OCI-LY7 (cell line): ENCODE measurements at regions of chr5 and their contacts with region 1.

Region 1: DNA sequence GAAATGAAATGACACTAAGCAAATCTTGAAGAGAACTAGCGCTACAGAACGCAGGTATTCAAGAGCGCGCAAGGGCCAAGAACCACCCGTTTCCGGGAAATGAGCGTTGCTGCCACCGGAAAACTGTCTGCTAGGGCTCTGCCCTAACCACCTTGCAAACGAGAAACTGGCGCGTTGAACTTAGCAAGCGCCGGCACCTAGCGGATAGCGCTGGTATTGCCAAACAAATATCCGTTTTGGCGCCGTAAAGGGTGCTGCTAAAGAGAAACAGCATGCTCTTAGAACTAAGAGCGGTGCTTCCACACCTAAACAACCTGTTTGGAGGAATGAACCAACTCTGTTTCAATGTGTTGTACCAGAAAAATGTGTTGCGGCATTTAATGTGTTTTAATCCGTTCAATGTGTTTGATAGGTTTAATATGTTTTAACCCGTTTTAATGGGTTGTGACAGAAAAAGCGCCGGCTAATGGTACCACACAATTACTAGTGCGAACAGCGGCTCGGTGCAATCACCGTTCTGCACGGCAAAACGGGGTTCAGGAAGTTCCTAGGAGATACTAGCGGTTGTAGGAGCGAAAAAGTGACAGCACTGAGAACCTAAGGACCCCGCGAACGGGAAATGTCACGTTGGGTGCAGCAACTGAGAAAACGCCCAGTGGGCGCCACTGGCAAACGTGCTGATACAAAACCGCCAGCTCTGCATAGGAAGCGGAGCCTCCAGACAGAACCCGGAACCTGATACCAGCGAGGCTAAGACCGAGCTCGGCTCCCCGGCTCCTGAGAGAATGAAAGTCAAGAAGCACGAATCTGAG is at the start of gene ANXA2R:
- DNase-seq: peak; percentile 98
- H3K4me3 ChIP-seq: peak within 1 kb of the TSS; percentile 70
- H3K27ac ChIP-seq: peak within 1 kb of the TSS; percentile 95
- H3K4me1 ChIP-seq: peaks cover 34% of the 10 kb centered on the region
- CTCF ChIP-seq: peak; percentile 77
- total RNA-seq, gene ANXA2R: 13.5 and 15.4 TPM in 2 replicates

Region 2: GRCh38 chr5:42950440-42951292 is 89.8 kb before region 1 on chr5:
- CTCF ChIA-PET with region 1: no interaction called
- POLR2A ChIA-PET with region 1: no interaction called
- intact Hi-C with region 1: loop called (anchors 5 kb)
- DNase-seq: peak; percentile 36
- H3K4me3 ChIP-seq: peak overlapping the region; percentile 68
- H3K27ac ChIP-seq: no peak overlapping the region
- H3K4me1 ChIP-seq: peaks cover 28% of the 10 kb centered on the region
- CTCF ChIP-seq: no peak

Region 3: DNA sequence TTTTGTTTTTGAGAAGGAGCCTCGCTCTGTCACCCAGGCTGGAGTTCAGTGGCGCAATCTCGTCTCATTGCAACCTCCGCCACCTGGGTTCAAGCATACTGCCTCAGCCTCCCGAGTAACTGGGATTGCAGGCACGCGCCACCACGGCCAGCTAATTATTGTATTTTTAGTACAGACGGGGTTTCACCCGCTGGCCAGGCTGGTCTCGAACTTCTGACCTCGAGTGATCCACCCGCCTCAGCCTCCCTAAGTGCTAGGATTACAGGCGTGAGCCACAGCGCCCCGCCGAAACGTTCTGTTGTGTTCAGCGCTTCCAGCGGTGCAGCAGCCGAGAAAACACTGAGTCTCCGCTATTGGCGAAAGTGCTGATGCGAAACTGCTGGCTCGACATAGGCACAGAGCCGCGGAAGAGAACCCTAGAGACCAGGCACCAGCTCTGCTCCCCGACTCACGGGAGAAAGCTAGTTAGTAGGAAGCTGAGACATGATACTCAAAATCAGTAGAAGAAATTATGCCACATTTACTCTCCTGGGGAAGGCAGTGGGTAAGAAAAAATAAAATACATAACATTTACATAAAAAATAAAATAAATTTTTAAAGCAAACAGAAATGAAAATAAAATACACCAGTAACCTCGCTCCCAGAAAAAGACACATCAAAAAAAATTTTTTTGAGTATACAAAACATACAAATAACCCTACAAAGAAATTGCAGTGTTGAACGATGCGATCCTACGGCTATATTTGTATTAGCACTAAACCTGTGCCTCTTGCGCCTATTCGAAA is 31.9 kb before region 1 on chr5:
- CTCF ChIA-PET with region 1: interaction called, 3 read pairs
- POLR2A ChIA-PET with region 1: interaction called, 55 read pairs
- intact Hi-C with region 1: loop called (anchors 1 kb)
- DNase-seq: peak; percentile 96
- H3K4me3 ChIP-seq: peak overlapping the region; percentile 70
- H3K27ac ChIP-seq: peak overlapping the region; percentile 86
- H3K4me1 ChIP-seq: peaks cover 32% of the 10 kb centered on the region
- CTCF ChIP-seq: peak; percentile 66

Region 4: DNA sequence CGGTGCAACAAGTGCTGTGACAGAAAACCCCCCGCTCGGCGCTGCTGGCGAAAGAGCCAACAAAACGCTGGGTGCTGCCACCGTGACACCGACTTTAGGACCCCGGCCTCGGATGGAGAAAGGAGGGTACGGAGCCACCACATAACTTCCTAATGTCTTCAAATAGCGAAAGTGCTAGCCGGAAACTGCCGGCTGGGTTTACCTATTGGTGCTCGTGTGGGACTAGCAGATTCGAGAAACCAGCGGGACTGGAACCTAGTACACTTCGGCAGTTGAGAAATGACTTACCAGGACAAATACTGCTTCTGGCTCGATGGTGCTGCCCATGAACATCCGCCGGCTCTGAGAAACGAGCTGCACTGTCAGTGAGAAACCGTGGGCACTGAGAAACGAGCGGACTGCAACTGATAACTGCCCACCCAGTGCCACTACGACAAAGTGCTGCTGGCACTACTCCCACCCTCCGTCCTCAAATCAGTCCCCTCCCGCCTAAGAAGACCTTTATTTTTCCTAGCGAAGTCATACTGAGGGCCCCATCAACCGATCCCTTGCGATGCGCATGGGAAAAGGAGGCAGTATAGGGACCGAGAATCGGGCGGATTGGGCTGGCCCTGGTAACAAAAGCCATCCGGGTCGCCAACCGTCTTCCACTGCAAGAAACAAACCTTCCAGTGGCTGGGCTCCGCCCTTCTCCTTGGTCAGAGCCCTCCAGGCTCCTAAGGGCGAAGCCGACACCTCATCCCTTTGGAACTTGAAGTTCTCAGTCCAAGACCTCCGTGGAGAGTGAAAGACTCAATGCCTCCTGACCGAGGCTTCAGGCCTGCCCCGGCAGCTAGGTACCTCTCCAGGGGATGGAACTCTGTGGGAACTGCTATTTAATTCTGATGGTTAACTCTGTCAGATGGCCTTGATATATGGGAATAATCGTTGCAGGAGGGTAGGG is 26.6 kb after region 1 on chr5:
- CTCF ChIA-PET with region 1: no interaction called
- POLR2A ChIA-PET with region 1: interaction called, 22 read pairs
- intact Hi-C with region 1: loop called (anchors 1 kb)
- DNase-seq: peak; percentile 93
- H3K4me3 ChIP-seq: peak overlapping the region; percentile 85
- H3K27ac ChIP-seq: peak overlapping the region; percentile 92
- H3K4me1 ChIP-seq: peaks cover 29% of the 10 kb centered on the region
- CTCF ChIP-seq: no peak

Region 5: GRCh38 chr5:44011518-44011917 is 971.0 kb after region 1 on chr5:
- CTCF ChIA-PET with region 1: no interaction called
- POLR2A ChIA-PET with region 1: no interaction called
- intact Hi-C with region 1: no loop called
- DNase-seq: no peak
- H3K4me3 ChIP-seq: no peak overlapping the region
- H3K27ac ChIP-seq: no peak overlapping the region
- H3K4me1 ChIP-seq: no peaks in the 10 kb centered on the region
- CTCF ChIP-seq: no peak